Mammary epithelial cell (primary cell): ENCODE measurements at regions of chr1 and their contacts with region 1.

Region 1: GRCh38 chr1:183528577-183528976 is 56.3 kb downstream of the SMG7 start:
- DNase-seq: no peak
- H3K4me3 ChIP-seq: no peak overlapping the region
- H3K27ac ChIP-seq: no peak overlapping the region
- H3K4me1 ChIP-seq: no peaks in the 10 kb centered on the region
- H3K27me3 ChIP-seq: no peaks in the 10 kb centered on the region
- CTCF ChIP-seq: no peak

Region 2: GRCh38 chr1:183368202-183369108 is 160.1 kb before region 1 on chr1:
- CTCF ChIA-PET with region 1: no interaction called
- dilution Hi-C with region 1: no loop called
- in situ Hi-C with region 1: no loop called
- intact Hi-C with region 1: no loop called
- DNase-seq: no peak
- H3K4me3 ChIP-seq: no peak overlapping the region
- H3K27ac ChIP-seq: no peak overlapping the region
- H3K4me1 ChIP-seq: no peaks in the 10 kb centered on the region
- H3K27me3 ChIP-seq: peaks cover 2% of the 10 kb centered on the region
- CTCF ChIP-seq: no peak

Region 3: GRCh38 chr1:183604038-183604808 is 75.6 kb after region 1 on chr1:
- CTCF ChIA-PET with region 1: no interaction called
- dilution Hi-C with region 1: loop called (anchors 5 kb)
- in situ Hi-C with region 1: no loop called
- intact Hi-C with region 1: no loop called
- DNase-seq: no peak
- H3K4me3 ChIP-seq: no peak overlapping the region
- H3K27ac ChIP-seq: no peak overlapping the region
- H3K4me1 ChIP-seq: peaks cover 17% of the 10 kb centered on the region
- H3K27me3 ChIP-seq: no peaks in the 10 kb centered on the region
- CTCF ChIP-seq: no peak

Region 4: DNA sequence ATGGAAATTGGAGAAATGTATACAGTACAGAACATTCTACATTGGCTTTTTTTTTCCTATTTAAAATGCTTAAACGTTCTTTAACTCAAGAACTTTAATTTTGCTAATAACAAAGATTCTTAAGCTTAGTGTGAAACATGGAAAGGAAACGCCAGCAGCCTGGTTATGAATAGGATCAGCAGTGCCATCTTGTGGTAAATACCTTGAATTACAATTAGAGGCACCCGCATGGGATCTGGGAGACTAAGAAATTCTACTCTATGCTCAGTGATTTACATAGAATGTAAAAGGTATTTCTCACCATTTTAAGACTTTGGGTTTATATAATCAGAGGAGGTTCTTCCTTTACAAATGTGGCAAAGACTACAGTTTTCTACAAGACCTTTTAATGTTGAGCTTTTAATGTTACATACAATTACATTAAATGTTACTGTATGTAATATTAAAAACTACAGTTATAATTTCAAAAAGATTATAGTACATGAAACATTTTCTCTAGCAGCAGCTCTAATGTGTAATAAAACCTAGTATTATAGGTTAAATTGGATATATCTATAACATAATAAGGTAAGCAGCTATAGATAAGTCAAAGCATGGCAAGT is 156.6 kb after region 1 on chr1:
- CTCF ChIA-PET with region 1: no interaction called
- dilution Hi-C with region 1: no loop called
- in situ Hi-C with region 1: no loop called
- intact Hi-C with region 1: no loop called
- DNase-seq: peak; percentile 32
- H3K4me3 ChIP-seq: no peak overlapping the region
- H3K27ac ChIP-seq: no peak overlapping the region
- H3K4me1 ChIP-seq: no peaks in the 10 kb centered on the region
- H3K27me3 ChIP-seq: no peaks in the 10 kb centered on the region
- CTCF ChIP-seq: peak; percentile 65 to 73

Region 5: DNA sequence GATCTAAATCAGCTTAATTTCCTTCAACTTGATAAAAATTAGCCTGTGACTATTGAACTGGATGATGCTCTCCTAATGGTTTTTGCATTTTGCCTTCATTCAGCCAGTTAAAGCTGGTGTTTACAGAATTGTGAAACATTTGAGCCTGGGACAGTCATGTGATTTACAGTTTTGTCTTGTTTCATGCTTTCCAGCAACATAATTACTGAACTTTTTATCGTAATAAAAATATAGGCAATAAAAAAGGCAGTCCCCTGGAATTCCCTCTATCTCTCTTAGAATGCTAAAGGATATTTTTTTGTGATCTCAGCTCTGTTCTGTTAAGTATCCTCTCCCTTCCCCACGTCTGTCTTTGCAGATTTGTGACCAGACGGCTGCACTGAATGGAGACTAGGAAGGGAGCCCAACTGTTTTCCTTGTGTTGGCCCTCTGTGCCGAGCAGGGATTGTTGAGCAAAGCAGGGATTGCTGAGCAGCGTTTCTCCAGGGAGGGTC is 206.0 kb after region 1 on chr1:
- CTCF ChIA-PET with region 1: no interaction called
- dilution Hi-C with region 1: no loop called
- in situ Hi-C with region 1: no loop called
- intact Hi-C with region 1: no loop called
- DNase-seq: no peak
- H3K4me3 ChIP-seq: no peak overlapping the region
- H3K27ac ChIP-seq: no peak overlapping the region
- H3K4me1 ChIP-seq: no peaks in the 10 kb centered on the region
- H3K27me3 ChIP-seq: no peaks in the 10 kb centered on the region
- CTCF ChIP-seq: no peak